ENCODE measurements at regions of chr1 and their contacts with region 1.

Region 1: GRCh38 chr1:36420836-36421664 is 23.3 kb upstream of the LSM10 start:
- DNase-seq: peak; percentile 79 to 93 (median 89)
- ATAC-seq: peak; percentile 99
- H3K4me3 ChIP-seq: no peak overlapping the region
- H3K27ac ChIP-seq: no peak overlapping the region
- H3K4me1 ChIP-seq: peaks cover 0 to 3% of the 10 kb centered on the region in 2 experiments; a peak in 2 of 5 replicates
- H3K27me3 ChIP-seq: no peaks in the 10 kb centered on the region
- CTCF ChIP-seq: peak; percentile 96 to 99 (median 99)
- EP300 ChIP-seq: peak; percentile 46; the same call in 1 of the 2 replicates
- POLR2A ChIP-seq: no peak
- RAD21 ChIP-seq: peak; percentile 97 to 99

Region 2: GRCh38 chr1:36099681-36100341 is 321.2 kb before region 1 on chr1:
- CTCF ChIA-PET with region 1: interaction called, 27 read pairs
- POLR2A ChIA-PET with region 1: no interaction called
- in situ Hi-C with region 1: loop called (anchors 5 kb)
- intact Hi-C with region 1: loop called (anchors 2 kb)
- DNase-seq: peak; percentile 87 to 91 (median 88)
- ATAC-seq: peak; percentile 96
- H3K4me3 ChIP-seq: peak overlapping the region; percentile 20; the same call in 1 of the 2 replicates
- H3K27ac ChIP-seq: no peak overlapping the region; the same call in 2 of the 3 replicates
- H3K4me1 ChIP-seq: peaks cover 0 to 36% of the 10 kb centered on the region in 2 experiments; a peak in 3 of 5 replicates
- H3K27me3 ChIP-seq: no peaks in the 10 kb centered on the region
- CTCF ChIP-seq: peak; percentile 94 to 95 (median 95)
- EP300 ChIP-seq: no peak
- POLR2A ChIP-seq: no peak
- RAD21 ChIP-seq: peak; percentile 95

Region 3: DNA sequence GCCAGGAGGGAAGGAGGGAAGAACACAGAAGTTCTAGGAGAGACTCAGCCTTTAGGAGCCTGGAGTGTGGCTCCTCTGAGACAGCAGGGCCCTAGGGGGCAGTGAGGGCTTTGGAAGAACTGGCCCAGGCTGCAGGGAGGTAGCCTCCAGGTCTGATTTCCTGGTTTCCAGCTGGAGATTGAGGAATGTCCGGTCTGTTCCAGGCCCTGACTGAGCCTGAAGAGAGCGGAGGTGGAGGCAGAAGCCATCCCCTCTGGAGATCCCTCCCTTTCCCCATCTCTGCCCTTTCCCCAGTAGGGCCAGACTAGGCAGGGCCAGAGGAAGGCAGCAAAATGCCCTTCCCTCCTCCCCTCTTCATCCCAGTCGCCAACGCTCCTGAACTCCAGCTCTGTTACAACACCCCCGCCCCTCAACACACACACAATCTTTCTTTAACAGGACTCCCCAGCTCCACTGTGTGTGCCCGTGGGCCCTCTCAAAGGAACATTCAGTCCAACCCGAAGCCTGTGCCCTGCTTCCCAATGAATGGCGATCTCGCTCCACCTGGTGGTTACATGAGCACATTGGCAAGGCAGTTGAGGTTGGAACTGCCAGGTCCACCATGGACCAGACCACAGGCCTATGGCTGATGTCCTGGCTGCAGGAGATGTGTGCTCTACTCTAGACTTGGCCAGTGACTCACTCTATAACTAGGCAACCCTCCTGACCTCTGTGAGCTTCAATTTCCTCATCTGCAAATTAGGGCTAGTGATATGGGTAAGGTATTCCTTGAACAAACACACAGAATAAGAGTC is 233.1 kb before region 1 on chr1:
- CTCF ChIA-PET with region 1: interaction called, 4 read pairs
- POLR2A ChIA-PET with region 1: no interaction called
- in situ Hi-C with region 1: no loop called
- intact Hi-C with region 1: loop called (anchors 10 kb)
- DNase-seq: peak; percentile 75 to 90 (median 82)
- ATAC-seq: peak; percentile 98
- H3K4me3 ChIP-seq: no peak overlapping the region
- H3K27ac ChIP-seq: peak overlapping the region; percentile 6; the same call in 1 of the 3 replicates
- H3K4me1 ChIP-seq: peaks cover 5 to 6% of the 10 kb centered on the region in 2 experiments; a peak in 3 of 5 replicates
- H3K27me3 ChIP-seq: no peaks in the 10 kb centered on the region
- CTCF ChIP-seq: peak; percentile 95 to 97 (median 97)
- EP300 ChIP-seq: no peak; the same call in 1 of the 2 replicates
- POLR2A ChIP-seq: no peak
- RAD21 ChIP-seq: peak; percentile 97 to 99

Region 4: DNA sequence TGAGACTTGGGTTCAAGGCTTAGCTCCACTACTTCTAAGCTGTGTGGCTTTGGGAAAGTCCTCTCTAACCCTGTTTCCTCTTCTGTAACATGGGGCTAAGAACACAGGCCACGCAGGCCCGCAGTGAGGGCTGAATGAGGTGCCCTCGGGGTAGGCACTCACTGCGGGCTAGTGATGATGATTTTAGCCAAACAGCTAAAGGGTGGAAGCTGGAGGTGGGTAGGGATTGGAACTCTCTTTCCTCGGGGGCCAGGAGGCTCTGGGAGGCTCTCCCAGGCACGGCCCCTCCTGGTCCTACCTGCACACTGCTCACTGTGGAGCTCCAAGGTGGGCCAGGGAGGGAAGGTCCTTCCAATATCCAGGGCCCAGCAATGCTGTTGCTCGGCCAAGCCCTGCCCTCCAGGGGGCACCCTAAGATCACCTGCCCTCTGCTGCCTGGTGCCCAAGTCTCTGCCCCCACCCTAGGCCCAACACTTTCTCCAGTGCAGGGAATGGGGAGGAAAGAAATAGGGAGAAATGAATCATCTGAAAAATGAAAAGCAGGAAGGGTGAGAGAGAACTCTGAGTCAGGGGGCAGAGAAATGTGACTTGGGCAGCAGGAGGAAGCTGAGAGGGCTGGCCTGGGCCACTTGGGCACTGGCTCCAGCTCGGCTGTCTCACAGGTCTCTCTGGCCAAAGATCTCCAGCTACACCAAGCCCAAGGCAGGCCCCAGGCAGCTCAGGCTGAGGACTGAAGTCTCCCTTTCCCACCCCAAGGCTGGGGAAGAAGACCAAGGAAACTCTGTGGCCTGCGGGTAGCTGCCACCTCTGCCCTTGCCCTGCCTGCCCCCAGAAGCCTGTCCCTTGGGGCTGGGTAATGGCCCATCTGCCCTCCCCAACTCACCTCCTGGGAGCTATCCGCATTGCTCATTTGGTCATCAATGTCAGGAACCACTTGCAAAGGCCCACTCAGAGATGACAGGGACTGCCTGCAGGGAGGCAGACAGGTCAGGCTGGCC is 78.3 kb before region 1 on chr1:
- CTCF ChIA-PET with region 1: interaction called, 27 read pairs
- POLR2A ChIA-PET with region 1: no interaction called
- in situ Hi-C with region 1: loop called (anchors 5 kb)
- intact Hi-C with region 1: loop called (anchors 1 kb)
- DNase-seq: peak; percentile 31 to 62 (median 48)
- ATAC-seq: peak; percentile 70
- H3K4me3 ChIP-seq: no peak overlapping the region
- H3K27ac ChIP-seq: no peak overlapping the region
- H3K4me1 ChIP-seq: peaks cover 1 to 44% of the 10 kb centered on the region in 2 experiments; a peak in 4 of 5 replicates
- H3K27me3 ChIP-seq: no peaks in the 10 kb centered on the region
- CTCF ChIP-seq: peak; percentile 71 to 79 (median 79)
- EP300 ChIP-seq: no peak
- POLR2A ChIP-seq: no peak
- RAD21 ChIP-seq: peak; percentile 69 to 72

Region 5: DNA sequence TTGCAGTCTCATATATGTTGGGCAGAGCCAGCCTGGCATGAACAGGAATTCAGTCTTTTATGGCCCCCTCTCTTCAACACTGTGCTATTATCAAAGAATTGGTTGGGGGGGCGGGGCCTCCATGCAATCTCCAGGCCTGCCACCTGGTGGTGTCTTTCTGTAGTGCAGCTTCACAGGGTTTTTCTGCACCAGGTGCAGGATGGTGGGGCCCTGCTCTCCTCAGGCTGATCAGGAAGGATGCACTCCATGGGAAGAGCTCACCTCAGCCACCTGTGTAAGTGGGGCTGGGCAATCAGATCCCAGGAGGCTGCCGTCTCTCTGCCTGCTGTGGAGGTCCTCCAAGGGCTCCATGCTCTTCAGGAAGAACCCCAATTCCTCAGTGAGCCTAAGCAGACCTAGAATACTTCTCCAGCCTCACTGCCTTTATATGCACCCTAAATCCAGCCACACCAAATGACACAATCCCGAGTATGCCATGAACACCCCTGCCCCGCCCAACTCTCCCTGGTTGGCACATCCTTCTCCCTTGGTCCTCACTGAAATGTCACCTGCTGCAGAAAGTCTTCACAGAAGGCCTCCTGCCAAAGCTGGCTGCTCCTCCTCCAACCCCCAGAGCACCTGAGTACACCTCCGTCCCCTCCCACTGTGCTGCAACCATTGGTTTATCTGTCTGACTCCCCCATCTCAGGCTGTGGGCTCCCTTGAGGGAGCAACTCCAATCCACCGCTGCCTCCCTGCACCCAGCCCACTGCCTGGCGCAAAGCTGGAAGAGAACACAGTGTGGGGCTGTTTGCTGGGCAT is 51.8 kb before region 1 on chr1:
- CTCF ChIA-PET with region 1: no interaction called
- POLR2A ChIA-PET with region 1: no interaction called
- in situ Hi-C with region 1: no loop called
- intact Hi-C with region 1: loop called (anchors 2 kb)
- DNase-seq: peak; percentile 89 to 91 (median 89)
- ATAC-seq: peak; percentile 61
- H3K4me3 ChIP-seq: no peak overlapping the region
- H3K27ac ChIP-seq: no peak overlapping the region; the same call in 2 of the 3 replicates
- H3K4me1 ChIP-seq: peaks cover 41 to 51% of the 10 kb centered on the region in 2 experiments
- H3K27me3 ChIP-seq: no peaks in the 10 kb centered on the region
- CTCF ChIP-seq: peak; percentile 94 to 96 (median 95)
- EP300 ChIP-seq: no peak
- POLR2A ChIP-seq: 0 out of 2 replicates have a peak, but pooled peaks have one; percentile 11
- RAD21 ChIP-seq: peak; percentile 60 to 80

Region 6: GRCh38 chr1:36440646-36441319 is 19.7 kb after region 1 on chr1:
- CTCF ChIA-PET with region 1: no interaction called
- POLR2A ChIA-PET with region 1: no interaction called
- in situ Hi-C with region 1: no loop called
- intact Hi-C with region 1: no loop called
- DNase-seq: no peak
- ATAC-seq: no peak
- H3K4me3 ChIP-seq: no peak overlapping the region
- H3K27ac ChIP-seq: no peak overlapping the region
- H3K4me1 ChIP-seq: no peaks in the 10 kb centered on the region
- H3K27me3 ChIP-seq: peaks cover 0 to 4% of the 10 kb centered on the region in 2 experiments; a peak in 1 of 5 replicates
- CTCF ChIP-seq: no peak
- EP300 ChIP-seq: no peak
- POLR2A ChIP-seq: no peak
- RAD21 ChIP-seq: no peak

Region 7: GRCh38 chr1:36486436-36487335 is 65.6 kb after region 1 on chr1:
- CTCF ChIA-PET with region 1: no interaction called
- POLR2A ChIA-PET with region 1: no interaction called
- in situ Hi-C with region 1: no loop called
- intact Hi-C with region 1: no loop called
- DNase-seq: peak in 2 of 4 experiments; percentile 25 to 48
- ATAC-seq: peak; percentile 42; the same call in 2 of the 3 replicates
- H3K4me3 ChIP-seq: no peak overlapping the region
- H3K27ac ChIP-seq: no peak overlapping the region
- H3K4me1 ChIP-seq: peaks cover 31 to 32% of the 10 kb centered on the region in 2 experiments
- H3K27me3 ChIP-seq: no peaks in the 10 kb centered on the region
- CTCF ChIP-seq: no peak
- EP300 ChIP-seq: no peak
- POLR2A ChIP-seq: no peak
- RAD21 ChIP-seq: no peak

Measured in K562 (cell line).